ENCODE measurements at regions of chr4 and their contacts with region 1.

Region 1: GRCh38 chr4:76002176-76002575 is 5.1 kb downstream of the CXCL9 start:
- DNase-seq: peak; percentile 65
- H3K4me3 ChIP-seq: no peak overlapping the region
- H3K27ac ChIP-seq: peak overlapping the region; percentile 34
- H3K4me1 ChIP-seq: peaks cover 8% of the 10 kb centered on the region
- H3K27me3 ChIP-seq: peaks cover 0 to 9% of the 10 kb centered on the region in 2 experiments
- CTCF ChIP-seq: no peak
- POLR2A ChIP-seq: no peak

Region 2: DNA sequence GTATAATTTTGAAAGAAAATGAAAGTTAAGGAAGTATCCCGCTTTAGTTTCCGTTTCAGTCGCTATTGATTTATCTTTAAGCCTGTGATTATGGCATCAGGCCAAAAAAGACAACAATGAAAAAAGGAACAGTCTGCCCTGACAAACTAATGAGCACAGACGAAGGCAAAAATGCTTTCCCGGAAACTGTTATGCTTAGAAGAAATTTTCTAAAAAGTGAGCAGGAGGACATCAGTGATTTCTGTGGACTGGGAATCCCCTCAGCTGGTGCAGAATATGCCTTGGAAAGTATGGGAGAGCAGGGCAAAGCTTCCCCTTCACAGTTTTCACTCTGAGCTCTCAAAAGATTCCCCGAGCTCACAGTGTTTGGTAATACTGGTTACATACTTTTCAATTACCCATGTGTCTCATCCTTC is 26.2 kb after region 1 on chr4:
- CTCF ChIA-PET with region 1: no interaction called
- POLR2A ChIA-PET with region 1: no interaction called
- dilution Hi-C with region 1: no loop called
- intact Hi-C with region 1: loop called (anchors 2 kb)
- DNase-seq: peak; percentile 72
- H3K4me3 ChIP-seq: peak overlapping the region; percentile 16 to 62 (median 36)
- H3K27ac ChIP-seq: peak overlapping the region; percentile 7
- H3K4me1 ChIP-seq: peaks cover 10% of the 10 kb centered on the region
- H3K27me3 ChIP-seq: peaks cover 4% of the 10 kb centered on the region in 2 experiments
- CTCF ChIP-seq: no peak
- POLR2A ChIP-seq: no peak

Measured in endothelial cell of umbilical vein (primary cell).